AG04450 (cell line): ENCODE measurements at regions of chr19 and their contacts with region 1.

Region 1: GRCh38 chr19:28746478-28746877 is 466.5 kb downstream of the UQCRFS1 start:
- DNase-seq: no peak
- H3K4me3 ChIP-seq: no peak overlapping the region
- H3K27ac ChIP-seq: no peak overlapping the region
- H3K27me3 ChIP-seq: no peaks in the 10 kb centered on the region
- CTCF ChIP-seq: no peak

Region 2: GRCh38 chr19:28680111-28680510 is 66.4 kb before region 1 on chr19:
- CTCF ChIA-PET with region 1: no interaction called
- POLR2A ChIA-PET with region 1: no interaction called
- DNase-seq: no peak
- H3K4me3 ChIP-seq: no peak overlapping the region
- H3K27ac ChIP-seq: no peak overlapping the region
- H3K27me3 ChIP-seq: no peaks in the 10 kb centered on the region
- CTCF ChIP-seq: no peak

Region 3: DNA sequence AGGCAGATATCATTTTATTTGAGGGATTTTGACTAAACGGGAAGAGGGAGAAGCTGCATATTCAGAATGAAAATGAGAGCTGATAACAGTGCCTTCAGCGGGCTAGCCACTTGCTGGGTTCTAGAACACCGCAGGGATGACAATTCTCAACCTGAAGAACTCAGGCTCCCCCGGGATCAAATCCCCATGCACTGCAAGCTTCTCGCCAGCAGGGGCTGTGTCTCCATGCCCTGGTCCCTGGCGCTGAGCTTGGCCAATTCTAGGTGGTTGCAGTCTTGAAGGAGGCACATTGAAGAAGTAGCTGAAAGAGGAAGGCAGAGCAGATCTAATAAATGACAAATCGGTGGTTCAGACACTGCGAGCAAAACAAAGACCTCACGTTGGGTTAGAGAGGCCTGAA is 337.8 kb after region 1 on chr19:
- CTCF ChIA-PET with region 1: interaction called, 12 read pairs
- POLR2A ChIA-PET with region 1: no interaction called
- DNase-seq: no peak
- H3K4me3 ChIP-seq: no peak overlapping the region
- H3K27ac ChIP-seq: no peak overlapping the region
- H3K27me3 ChIP-seq: no peaks in the 10 kb centered on the region
- CTCF ChIP-seq: peak; percentile 13; the same call in 1 of the 2 replicates